GM10248 (cell line): ENCODE measurements at regions of chr4 and their contacts with region 1.

Region 1: DNA sequence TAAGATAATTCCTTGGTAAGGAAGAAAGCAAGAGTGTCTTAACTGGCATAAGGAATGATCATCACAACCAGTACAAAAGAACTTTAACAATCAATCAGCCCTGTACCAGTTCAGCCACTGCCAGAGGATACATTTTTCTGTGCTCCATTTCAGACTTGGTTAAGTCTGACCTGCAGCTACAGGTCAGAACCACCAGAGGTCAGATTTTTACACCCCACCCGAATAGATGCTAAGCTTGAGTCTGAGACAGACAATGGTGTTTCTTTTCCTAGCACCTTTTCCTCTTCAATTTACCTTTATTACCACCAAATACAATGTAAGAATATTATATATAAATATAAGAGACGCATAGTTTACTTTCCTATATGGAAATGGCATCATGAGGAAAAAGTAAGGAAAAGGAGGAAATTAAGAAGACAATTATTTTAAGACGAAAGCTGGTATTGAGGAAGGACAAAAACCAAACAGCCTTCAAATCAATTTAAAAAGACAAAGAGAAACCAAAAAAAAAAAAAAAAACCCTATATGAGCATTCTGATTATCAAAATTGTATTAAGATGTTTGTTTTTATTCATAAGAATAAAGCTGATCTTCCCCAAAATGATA is 215.3 kb upstream of the TTC29 start:
- DNase-seq: peak; percentile 64
- CTCF ChIP-seq: peak; percentile 85

Region 2: GRCh38 chr4:147173797-147174432 is 12.9 kb after region 1 on chr4:
- CTCF ChIA-PET with region 1: interaction called, 10 read pairs
- POLR2A ChIA-PET with region 1: no interaction called
- DNase-seq: no peak
- CTCF ChIP-seq: no peak

Region 3: DNA sequence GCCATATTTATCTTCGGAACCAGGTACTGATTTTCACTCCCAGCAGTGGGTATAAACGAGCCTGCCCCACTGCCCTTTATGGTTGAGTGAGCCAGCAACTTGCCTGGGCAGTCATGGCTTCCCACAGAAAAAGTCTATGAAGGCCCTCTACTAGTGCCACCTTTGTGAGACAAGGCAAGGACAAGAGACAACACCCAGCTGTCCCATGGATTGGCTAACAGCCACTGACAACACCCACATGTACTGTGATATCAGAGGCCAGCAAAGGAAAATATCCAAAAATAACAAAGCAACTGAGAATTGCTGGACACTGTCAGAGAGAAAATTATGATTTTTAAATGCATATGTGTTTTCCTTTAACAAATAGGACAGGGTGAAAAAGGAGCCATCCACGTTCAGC is 33.1 kb after region 1 on chr4:
- CTCF ChIA-PET with region 1: no interaction called
- POLR2A ChIA-PET with region 1: no interaction called
- DNase-seq: no peak
- CTCF ChIP-seq: no peak

Region 4: DNA sequence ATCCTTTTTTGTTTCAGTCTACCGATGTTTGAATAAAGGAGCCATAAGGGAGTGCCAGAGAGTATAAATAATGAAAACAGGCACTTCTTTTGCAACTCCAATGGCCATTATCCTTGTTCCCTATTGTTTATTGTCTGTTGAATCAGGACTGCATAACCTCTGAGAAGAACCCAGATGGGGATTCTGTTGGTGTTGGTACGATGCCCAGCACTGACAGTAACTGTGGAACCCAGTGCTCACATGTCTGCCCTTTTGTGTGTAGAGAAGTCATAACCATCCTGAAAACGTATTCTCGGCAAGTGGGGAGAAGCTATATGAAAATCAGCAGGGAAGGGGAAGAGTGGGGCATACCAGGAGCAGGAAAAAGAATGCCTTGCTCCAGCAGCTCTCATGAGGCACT is 124.7 kb after region 1 on chr4:
- CTCF ChIA-PET with region 1: no interaction called
- POLR2A ChIA-PET with region 1: no interaction called
- DNase-seq: no peak
- CTCF ChIP-seq: no peak

Region 5: GRCh38 chr4:147596981-147597380 is 436.0 kb after region 1 on chr4:
- CTCF ChIA-PET with region 1: interaction called, 14 read pairs
- POLR2A ChIA-PET with region 1: no interaction called
- DNase-seq: no peak
- CTCF ChIP-seq: no peak